HepG2 (cell line): ENCODE measurements at regions of chr18 and their contacts with region 1.

Region 1: DNA sequence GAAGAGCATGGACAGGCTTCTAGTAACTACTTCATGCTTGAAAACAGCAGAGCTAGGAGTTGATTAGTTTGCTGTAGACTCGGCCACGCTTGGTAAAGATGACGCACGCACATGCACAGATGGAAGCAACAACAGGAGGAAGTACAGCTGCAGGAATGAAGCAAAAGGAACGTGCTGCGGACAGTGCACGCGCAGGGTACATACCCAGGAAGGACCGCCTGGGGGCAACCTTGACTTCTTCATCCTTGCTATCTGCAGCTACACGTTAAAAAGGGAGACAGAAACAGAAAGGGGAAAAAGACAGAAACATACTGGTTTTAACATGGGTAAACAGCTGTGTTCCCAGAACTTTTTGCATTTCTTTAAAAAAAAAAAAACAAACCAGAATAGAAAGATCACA is 17.7 kb downstream of the SLC66A2 start:
- DNase-seq: peak; percentile 81
- ATAC-seq: peak; percentile 82
- H3K4me3 ChIP-seq: peak overlapping the region in 2 of 3 experiments; percentile 34 to 55; a peak in 3 of 6 replicates
- H3K27ac ChIP-seq: peak overlapping the region; percentile 88
- H3K4me1 ChIP-seq: peaks cover 58% of the 10 kb centered on the region
- H3K27me3 ChIP-seq: no peaks in the 10 kb centered on the region
- CTCF ChIP-seq: peak; percentile 91
- EP300 ChIP-seq: no peak
- POLR2A ChIP-seq: no peak
- RAD21 ChIP-seq: peak; percentile 80

Region 2: GRCh38 chr18:79567481-79568147 is 366.2 kb before region 1 on chr18:
- CTCF ChIA-PET with region 1: no interaction called
- POLR2A ChIA-PET with region 1: no interaction called
- in situ Hi-C with region 1: no loop called
- intact Hi-C with region 1: no loop called
- DNase-seq: no peak
- ATAC-seq: no peak
- H3K4me3 ChIP-seq: no peak overlapping the region
- H3K27ac ChIP-seq: no peak overlapping the region
- H3K4me1 ChIP-seq: no peaks in the 10 kb centered on the region
- H3K27me3 ChIP-seq: peaks cover 4 to 30% of the 10 kb centered on the region in 2 experiments; a peak in 3 of 5 replicates
- CTCF ChIP-seq: no peak
- EP300 ChIP-seq: no peak
- POLR2A ChIP-seq: no peak
- RAD21 ChIP-seq: no peak

Region 3: GRCh38 chr18:79834834-79835233 is 98.9 kb before region 1 on chr18:
- CTCF ChIA-PET with region 1: no interaction called
- POLR2A ChIA-PET with region 1: no interaction called
- in situ Hi-C with region 1: no loop called
- intact Hi-C with region 1: no loop called
- DNase-seq: no peak
- ATAC-seq: no peak
- H3K4me3 ChIP-seq: no peak overlapping the region
- H3K27ac ChIP-seq: no peak overlapping the region
- H3K4me1 ChIP-seq: peaks cover 7% of the 10 kb centered on the region
- H3K27me3 ChIP-seq: peaks cover 4 to 31% of the 10 kb centered on the region in 2 experiments; a peak in 3 of 5 replicates
- CTCF ChIP-seq: no peak
- EP300 ChIP-seq: no peak
- POLR2A ChIP-seq: no peak
- RAD21 ChIP-seq: no peak

Region 4: GRCh38 chr18:79951578-79952455 is 18.1 kb after region 1 on chr18 and contains the start of gene SLC66A2:
- CTCF ChIA-PET with region 1: interaction called, 7 read pairs
- POLR2A ChIA-PET with region 1: interaction called, 21 read pairs
- in situ Hi-C with region 1: no loop called
- intact Hi-C with region 1: loop called (anchors 1 kb)
- DNase-seq: peak; percentile 57
- ATAC-seq: peak; percentile 86
- H3K4me3 ChIP-seq: peak within 1 kb of the TSS; percentile 85 to 89 (median 88)
- H3K27ac ChIP-seq: peak within 1 kb of the TSS; percentile 55
- H3K4me1 ChIP-seq: peaks cover 54% of the 10 kb centered on the region
- H3K27me3 ChIP-seq: no peaks in the 10 kb centered on the region; a peak in 1 of 5 replicates
- CTCF ChIP-seq: no peak
- EP300 ChIP-seq: no peak
- POLR2A ChIP-seq: no peak
- RAD21 ChIP-seq: 0 out of 2 replicates have a peak, but pooled peaks have one; percentile 9
- total RNA-seq, gene SLC66A2: 30.3 and 41.9 TPM in 2 replicates

Region 5: GRCh38 chr18:79964330-79965118 is 30.8 kb after region 1 on chr18 and contains the start of gene HSBP1L1:
- CTCF ChIA-PET with region 1: interaction called, 23 read pairs
- POLR2A ChIA-PET with region 1: interaction called, 26 read pairs
- in situ Hi-C with region 1: no loop called
- intact Hi-C with region 1: loop called (anchors 1 kb)
- DNase-seq: peak; percentile 65
- ATAC-seq: peak; percentile 90
- H3K4me3 ChIP-seq: peak within 1 kb of the TSS; percentile 78 to 86 (median 85)
- H3K27ac ChIP-seq: peak within 1 kb of the TSS; percentile 91
- H3K4me1 ChIP-seq: peaks cover 66% of the 10 kb centered on the region
- H3K27me3 ChIP-seq: no peaks in the 10 kb centered on the region
- CTCF ChIP-seq: peak; percentile 54
- EP300 ChIP-seq: no peak
- POLR2A ChIP-seq: peak; percentile 56 to 83
- RAD21 ChIP-seq: peak; percentile 84
- total RNA-seq, gene HSBP1L1: 15.3 and 22.6 TPM in 2 replicates

Region 6: GRCh38 chr18:79988451-79989194 is 54.9 kb after region 1 on chr18 and contains the start of gene TXNL4A:
- CTCF ChIA-PET with region 1: interaction called, 8 read pairs
- POLR2A ChIA-PET with region 1: interaction called, 45 read pairs
- in situ Hi-C with region 1: no loop called
- intact Hi-C with region 1: loop called (anchors 1 kb)
- DNase-seq: peak; percentile 69
- ATAC-seq: peak; percentile 95
- H3K4me3 ChIP-seq: peak within 1 kb of the TSS; percentile 84 to 96 (median 85)
- H3K27ac ChIP-seq: peak within 1 kb of the TSS; percentile 85
- H3K4me1 ChIP-seq: peaks cover 51% of the 10 kb centered on the region
- H3K27me3 ChIP-seq: no peaks in the 10 kb centered on the region; a peak in 1 of 5 replicates
- CTCF ChIP-seq: no peak
- EP300 ChIP-seq: no peak
- POLR2A ChIP-seq: peak; percentile 80 to 95
- RAD21 ChIP-seq: peak; percentile 33
- total RNA-seq, gene TXNL4A: 192 and 202 TPM in 2 replicates

Region 7: DNA sequence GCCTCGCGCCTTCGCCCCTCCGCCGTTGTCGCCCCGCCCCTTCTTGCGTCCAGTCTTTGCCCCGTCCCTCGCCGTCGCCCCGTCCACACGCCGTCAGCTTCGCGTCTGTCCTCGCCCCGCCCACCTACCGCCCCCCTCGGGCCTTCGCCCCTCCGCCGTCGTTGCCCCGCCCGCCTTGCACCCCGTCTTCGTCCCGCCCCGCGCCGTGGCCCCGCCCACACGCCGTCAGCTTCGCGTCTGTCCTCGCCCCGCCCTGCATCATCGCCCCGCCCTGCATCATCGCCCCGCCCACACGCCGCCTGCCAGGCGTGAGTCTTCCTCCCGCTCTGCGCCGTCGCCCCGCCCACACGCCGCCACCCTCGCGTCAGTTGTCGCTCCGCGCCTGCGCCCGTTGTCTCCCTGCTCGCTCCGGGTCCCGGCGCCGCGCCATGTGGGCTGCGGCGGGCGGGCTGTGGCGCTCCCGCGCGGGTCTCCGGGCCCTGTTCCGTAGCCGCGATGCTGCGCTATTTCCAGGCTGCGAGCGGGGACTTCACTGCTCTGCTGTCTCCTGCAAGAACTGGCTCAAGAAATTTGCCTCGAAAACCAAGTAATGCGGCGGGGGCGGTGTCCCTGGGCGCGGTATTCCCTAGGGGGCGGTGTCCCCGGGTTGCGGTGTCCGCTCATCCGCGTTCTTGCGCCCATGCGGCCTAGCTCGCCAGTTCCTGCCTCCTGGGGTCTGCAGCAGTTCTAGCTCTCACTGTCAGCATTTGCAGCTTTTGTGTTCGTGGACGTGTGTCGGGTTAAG is 100.5 kb after region 1 on chr18 and contains the start of gene RBFA:
- CTCF ChIA-PET with region 1: interaction called, 3 read pairs
- POLR2A ChIA-PET with region 1: interaction called, 13 read pairs
- in situ Hi-C with region 1: no loop called
- intact Hi-C with region 1: loop called (anchors 1 kb)
- DNase-seq: peak; percentile 88
- ATAC-seq: peak; percentile 90
- H3K4me3 ChIP-seq: peak within 1 kb of the TSS; percentile 74 to 90 (median 86)
- H3K27ac ChIP-seq: peak within 1 kb of the TSS; percentile 79
- H3K4me1 ChIP-seq: peaks cover 37% of the 10 kb centered on the region
- H3K27me3 ChIP-seq: no peaks in the 10 kb centered on the region; a peak in 1 of 5 replicates
- CTCF ChIP-seq: peak; percentile 83
- EP300 ChIP-seq: no peak
- POLR2A ChIP-seq: peak; percentile 82 to 85
- RAD21 ChIP-seq: peak; percentile 76; the same call in 1 of the 2 replicates
- total RNA-seq, gene RBFA: 42.2 and 42.4 TPM in 2 replicates

Region 8: GRCh38 chr18:80108728-80109675 is 175.2 kb after region 1 on chr18 and contains the start of gene ADNP2:
- CTCF ChIA-PET with region 1: no interaction called
- POLR2A ChIA-PET with region 1: interaction called, 7 read pairs
- in situ Hi-C with region 1: loop called (anchors 10 kb)
- intact Hi-C with region 1: loop called (anchors 2 kb)
- DNase-seq: peak; percentile 96
- ATAC-seq: peak; percentile 74
- H3K4me3 ChIP-seq: peak within 1 kb of the TSS; percentile 79 to 96 (median 88)
- H3K27ac ChIP-seq: peak within 1 kb of the TSS; percentile 85
- H3K4me1 ChIP-seq: peaks cover 89% of the 10 kb centered on the region
- H3K27me3 ChIP-seq: no peaks in the 10 kb centered on the region
- CTCF ChIP-seq: no peak
- EP300 ChIP-seq: no peak
- POLR2A ChIP-seq: peak; percentile 57 to 63; a peak in 3 of 4 replicates
- RAD21 ChIP-seq: no peak
- total RNA-seq, gene ADNP2: 25.5 and 28.6 TPM in 2 replicates

Region 9: DNA sequence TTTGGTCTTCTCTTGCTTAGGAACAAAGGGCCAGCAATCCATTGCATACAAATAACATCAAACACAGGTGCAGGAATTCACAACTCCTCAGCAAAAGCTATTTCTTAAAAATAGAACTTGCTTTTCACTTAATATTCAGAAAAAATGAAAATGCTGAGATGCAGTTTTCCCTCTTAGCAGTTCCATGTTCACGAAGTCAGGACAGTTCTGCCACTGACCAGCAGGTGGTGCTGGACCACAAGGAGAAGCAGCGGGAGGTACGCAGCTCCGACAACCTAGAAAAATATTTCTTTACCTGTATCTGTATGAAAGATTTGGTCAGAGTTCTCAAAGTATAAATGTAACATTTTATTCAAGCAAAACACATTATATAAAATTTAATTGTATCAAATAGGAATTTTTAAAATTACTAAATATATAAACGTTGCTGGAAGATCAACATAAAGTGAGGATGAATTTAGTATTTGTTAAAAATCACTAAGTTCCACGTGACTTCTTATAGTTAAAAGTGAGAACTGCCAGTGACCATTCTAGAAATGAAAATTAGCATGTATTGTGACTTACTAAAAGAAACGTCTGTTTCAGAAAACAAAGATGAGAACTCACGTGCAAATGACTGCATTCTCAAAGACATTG is 224.1 kb after region 1 on chr18:
- CTCF ChIA-PET with region 1: interaction called, 8 read pairs
- POLR2A ChIA-PET with region 1: no interaction called
- in situ Hi-C with region 1: no loop called
- intact Hi-C with region 1: loop called (anchors 2 kb)
- DNase-seq: peak; percentile 57
- ATAC-seq: peak; percentile 61
- H3K4me3 ChIP-seq: no peak overlapping the region
- H3K27ac ChIP-seq: no peak overlapping the region
- H3K4me1 ChIP-seq: no peaks in the 10 kb centered on the region
- H3K27me3 ChIP-seq: no peaks in the 10 kb centered on the region
- CTCF ChIP-seq: peak; percentile 86
- EP300 ChIP-seq: no peak
- POLR2A ChIP-seq: no peak
- RAD21 ChIP-seq: peak; percentile 49